Activated CD4-positive, alpha-beta T cell treated with anti-CD3 and anti-CD28 coated beads for 36 hours (primary cell): ENCODE measurements at regions of chr22 and their contacts with region 1.

Region 1: DNA sequence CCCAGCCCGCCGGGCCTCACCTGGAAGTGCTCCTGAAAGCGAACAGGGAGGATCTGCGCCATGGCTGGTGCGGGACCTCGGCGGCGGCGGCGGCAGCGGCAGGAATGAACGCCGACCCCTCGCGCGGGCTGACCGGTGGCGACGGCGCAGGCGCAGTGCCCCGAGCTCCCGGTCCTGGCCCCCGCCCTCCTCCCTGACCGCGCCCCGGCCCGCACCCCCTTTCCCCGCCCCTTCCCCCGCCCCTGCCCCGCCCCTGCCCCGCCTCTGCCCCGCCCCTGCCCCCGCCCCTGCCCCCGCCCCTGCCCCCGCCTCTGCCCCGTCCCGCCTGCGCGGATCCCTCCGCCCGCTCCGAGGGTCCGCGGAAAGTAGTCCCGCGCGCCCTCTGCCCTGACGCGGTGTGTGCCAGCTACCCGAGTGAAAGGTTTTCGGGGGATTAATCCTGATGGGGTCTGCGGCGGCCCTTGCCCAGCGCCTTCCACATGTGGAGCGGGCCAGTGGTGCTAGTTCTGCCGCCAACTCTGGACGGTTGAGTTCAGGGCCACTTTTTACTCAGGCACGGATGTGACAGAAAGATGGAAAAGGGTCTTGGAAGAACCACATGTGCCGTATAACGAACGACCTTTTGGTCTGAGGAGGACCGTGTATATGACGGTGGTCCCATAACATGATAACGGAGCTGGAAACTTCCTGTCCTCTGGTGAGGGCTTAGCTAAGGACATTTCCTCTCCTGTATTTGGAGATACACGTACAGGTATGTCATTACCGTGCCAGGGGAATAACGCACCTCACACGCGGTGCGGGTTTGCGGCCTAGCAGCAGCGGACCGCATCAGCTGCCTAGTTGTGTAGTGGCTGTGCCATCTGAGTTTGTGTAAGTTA is at the start of gene CLTCL1:
- DNase-seq: peak; percentile 85
- ATAC-seq: peak; percentile 75
- H3K4me3 Mint-ChIP-seq: peak within 1 kb of the TSS; percentile 87
- H3K27ac Mint-ChIP-seq: peak within 1 kb of the TSS; percentile 65
- H3K4me1 Mint-ChIP-seq: peaks cover 12% of the 10 kb centered on the region
- H3K27me3 Mint-ChIP-seq: peaks cover 24% of the 10 kb centered on the region
- total RNA-seq, gene CLTCL1: 0.76 to 1.2 TPM

Region 2: GRCh38 chr22:19122143-19122751 is 169.6 kb before region 1 on chr22 and contains the start of gene DGCR2:
- CTCF ChIA-PET with region 1: no interaction called
- POLR2A ChIA-PET with region 1: interaction called, 3 read pairs
- intact Hi-C with region 1: loop called (anchors 1 to 2 kb)
- DNase-seq: peak; percentile 99
- ATAC-seq: peak; percentile 97
- H3K4me3 Mint-ChIP-seq: peak within 1 kb of the TSS; percentile 80
- H3K27ac Mint-ChIP-seq: peak within 1 kb of the TSS; percentile 58
- H3K4me1 Mint-ChIP-seq: peaks cover 42% of the 10 kb centered on the region
- H3K27me3 Mint-ChIP-seq: no peaks in the 10 kb centered on the region
- total RNA-seq, gene DGCR2: 23.7 to 27.5 TPM

Region 3: GRCh38 chr22:19178656-19179496 is 112.9 kb before region 1 on chr22 and contains the start of gene SLC25A1:
- CTCF ChIA-PET with region 1: interaction called, 6 read pairs
- POLR2A ChIA-PET with region 1: no interaction called
- intact Hi-C with region 1: loop called (anchors 1 to 5 kb)
- DNase-seq: peak; percentile 93
- ATAC-seq: peak; percentile 82
- H3K4me3 Mint-ChIP-seq: peak within 1 kb of the TSS; percentile 75
- H3K27ac Mint-ChIP-seq: peak within 1 kb of the TSS; percentile 19
- H3K4me1 Mint-ChIP-seq: peaks cover 27% of the 10 kb centered on the region
- H3K27me3 Mint-ChIP-seq: no peaks in the 10 kb centered on the region
- total RNA-seq, gene SLC25A1: 48.5 to 52.8 TPM

Region 4: GRCh38 chr22:19447388-19448075 is 155.7 kb after region 1 on chr22 and contains the start of gene C22orf39:
- CTCF ChIA-PET with region 1: no interaction called
- POLR2A ChIA-PET with region 1: no interaction called
- intact Hi-C with region 1: loop called in 1 of 2 experiments (anchors 1 kb)
- DNase-seq: peak; percentile 91
- ATAC-seq: peak; percentile 83
- H3K4me3 Mint-ChIP-seq: peak within 1 kb of the TSS; percentile 87
- H3K27ac Mint-ChIP-seq: peak within 1 kb of the TSS; percentile 98
- H3K4me1 Mint-ChIP-seq: peaks cover 36% of the 10 kb centered on the region
- H3K27me3 Mint-ChIP-seq: no peaks in the 10 kb centered on the region
- total RNA-seq, gene C22orf39: 21.9 to 22.2 TPM

Region 5: DNA sequence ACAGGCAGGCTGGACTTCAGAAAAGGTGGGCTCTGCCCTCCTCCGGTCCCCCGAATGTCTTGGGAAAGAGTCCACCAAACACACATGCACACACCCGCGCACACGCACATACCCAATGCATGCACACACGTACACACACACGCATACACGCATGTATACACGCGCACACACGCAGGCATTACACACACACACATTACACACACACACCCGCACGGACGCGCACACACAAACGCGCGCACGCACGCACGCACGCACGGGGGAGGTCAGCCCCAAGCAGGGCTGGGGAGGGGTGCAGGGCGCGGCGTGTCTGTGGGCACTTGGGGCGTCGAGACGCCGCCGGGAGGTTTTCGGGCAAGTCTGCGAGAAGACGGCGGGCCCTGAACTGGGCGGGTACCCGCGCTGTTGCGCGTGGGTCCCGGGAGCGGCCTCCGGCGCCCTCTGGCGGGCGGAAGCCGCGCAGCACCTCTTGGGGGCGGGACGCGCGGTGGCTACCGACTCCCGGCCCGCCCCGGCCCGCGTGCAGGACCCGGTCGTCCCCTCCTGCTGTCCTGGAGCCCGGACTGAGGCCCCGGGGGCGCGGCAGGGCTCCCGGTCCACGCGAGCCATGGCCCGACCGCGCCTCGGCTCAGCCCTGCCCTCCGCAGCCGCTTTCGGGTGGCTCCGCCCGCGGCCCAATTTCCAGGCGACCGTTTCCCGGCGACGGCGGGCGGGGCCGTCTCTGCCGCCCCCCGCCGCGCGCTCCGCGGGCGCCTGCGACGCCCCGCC is 426.1 kb after region 1 on chr22:
- CTCF ChIA-PET with region 1: no interaction called
- POLR2A ChIA-PET with region 1: no interaction called
- intact Hi-C with region 1: loop called in 1 of 2 experiments (anchors 2 kb)
- DNase-seq: peak; percentile 87
- ATAC-seq: peak; percentile 92
- H3K4me3 Mint-ChIP-seq: peak overlapping the region; percentile 63
- H3K27ac Mint-ChIP-seq: no peak overlapping the region
- H3K4me1 Mint-ChIP-seq: peaks cover 11% of the 10 kb centered on the region
- H3K27me3 Mint-ChIP-seq: peaks cover 29% of the 10 kb centered on the region

Region 6: DNA sequence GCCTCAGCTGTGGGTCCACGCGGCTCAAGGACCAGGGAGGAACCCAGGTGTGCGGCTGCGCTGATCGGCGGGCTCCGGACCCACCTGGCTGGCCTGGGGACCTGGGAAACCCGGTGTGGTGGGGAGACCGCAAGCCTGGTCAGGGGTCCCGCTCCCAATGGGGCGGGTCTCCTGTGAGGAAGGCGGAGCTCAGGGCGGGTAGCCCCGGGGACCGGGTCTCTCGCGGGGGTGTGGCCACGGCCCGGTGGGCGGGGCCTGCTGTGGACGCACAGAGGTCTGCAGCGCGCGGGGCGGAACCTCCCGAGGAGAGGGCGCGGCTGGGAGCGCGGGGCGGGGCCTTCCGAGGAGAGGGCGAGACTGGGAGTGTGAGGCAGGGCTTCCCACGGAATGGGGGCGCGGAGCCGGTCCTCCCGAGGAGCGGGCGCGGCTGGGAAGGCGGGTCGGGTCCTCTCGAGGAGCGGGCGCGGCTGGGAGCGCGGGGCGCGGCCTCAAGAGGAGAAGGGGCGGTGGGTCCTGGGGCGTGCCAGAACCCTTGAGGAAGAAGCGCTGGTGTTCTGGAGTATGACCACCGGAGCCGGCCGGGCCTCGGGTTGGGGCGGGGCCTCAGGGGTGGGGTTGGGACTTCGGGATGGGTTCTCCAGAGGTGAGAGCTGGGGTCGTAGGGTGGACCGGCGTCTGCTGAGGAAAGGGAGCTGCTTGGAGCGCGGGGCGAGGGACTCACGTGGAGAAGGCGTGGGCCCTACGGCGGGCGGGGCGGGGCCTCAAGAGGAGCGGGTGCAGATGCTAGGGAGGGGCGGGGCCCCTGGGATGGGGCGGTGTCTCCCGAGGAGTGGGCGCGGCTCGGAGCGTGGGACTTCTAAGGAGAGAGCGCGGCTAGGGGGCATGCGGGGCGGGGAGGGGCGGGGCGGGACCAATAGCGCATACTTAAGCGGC is 1007.2 kb after region 1 on chr22:
- CTCF ChIA-PET with region 1: no interaction called
- POLR2A ChIA-PET with region 1: no interaction called
- intact Hi-C with region 1: loop called in 1 of 2 experiments (anchors 1 kb)
- DNase-seq: peak; percentile 95
- ATAC-seq: peak; percentile 91
- H3K4me3 Mint-ChIP-seq: peak overlapping the region; percentile 71
- H3K27ac Mint-ChIP-seq: peak overlapping the region; percentile 43
- H3K4me1 Mint-ChIP-seq: no peaks in the 10 kb centered on the region
- H3K27me3 Mint-ChIP-seq: peaks cover 7% of the 10 kb centered on the region